Head of caudate nucleus (tissue), 42 donors: ENCODE measurements at regions of chr19 and their contacts with region 1.

Region 1: DNA sequence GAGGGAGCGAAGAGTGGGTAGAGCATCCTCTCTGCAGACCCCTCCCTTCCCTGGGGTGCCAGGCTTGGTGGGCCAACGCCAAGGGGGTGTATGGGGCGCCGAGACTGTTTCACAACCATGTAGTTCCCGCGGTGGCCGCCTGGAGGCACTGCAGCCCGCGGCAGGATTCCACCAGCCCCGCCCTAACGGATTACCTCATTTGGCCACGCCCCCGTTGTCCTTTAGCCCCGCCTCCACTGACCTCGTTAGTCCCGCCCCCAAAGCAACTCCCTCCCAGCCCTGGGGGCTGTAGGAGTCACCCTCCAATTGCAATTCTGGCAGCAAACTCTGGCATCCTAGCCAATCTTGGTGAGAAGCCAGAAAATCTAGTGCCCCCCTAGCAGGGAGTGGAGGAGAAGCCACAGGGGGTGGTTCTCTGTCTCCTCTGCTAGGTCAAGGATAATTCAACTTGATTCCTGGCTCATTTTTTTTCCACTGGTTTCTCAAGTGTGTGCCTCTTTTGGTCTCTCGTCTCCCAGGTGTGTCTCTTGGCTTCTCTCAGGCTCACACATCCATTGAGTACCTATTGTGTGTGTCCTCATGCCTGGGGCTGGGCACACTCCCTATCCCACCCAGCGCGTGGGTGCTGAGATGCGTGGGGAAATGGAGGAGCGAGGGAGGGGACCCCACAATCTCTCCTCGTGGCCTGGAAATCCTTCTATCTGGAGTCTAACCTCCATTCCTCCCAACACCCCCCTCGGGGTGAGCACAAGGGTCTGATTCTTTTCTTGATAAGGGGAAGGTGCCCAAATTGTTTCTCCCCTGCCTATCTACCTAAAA is 2.0 kb downstream of the OLFM2 start:
- DNase-seq: peak; percentile 56 to 92 (median 80)

Region 2: GRCh38 chr19:10027158-10027693 is 92.9 kb after region 1 on chr19:
- intact Hi-C with region 1: loop called (anchors 5 kb)
- DNase-seq: no peak

Region 3: GRCh38 chr19:10095948-10096621 is 161.7 kb after region 1 on chr19:
- intact Hi-C with region 1: loop called (anchors 10 kb)
- DNase-seq: peak; percentile 42 to 93 (median 88)

Region 4: GRCh38 chr19:10251792-10252694 is 317.7 kb after region 1 on chr19 and contains the start of gene MRPL4:
- intact Hi-C with region 1: loop called (anchors 10 kb)
- DNase-seq: peak; percentile 89 to 99 (median 97)